ENCODE measurements at regions of chr17 and their contacts with region 1.

Region 1: DNA sequence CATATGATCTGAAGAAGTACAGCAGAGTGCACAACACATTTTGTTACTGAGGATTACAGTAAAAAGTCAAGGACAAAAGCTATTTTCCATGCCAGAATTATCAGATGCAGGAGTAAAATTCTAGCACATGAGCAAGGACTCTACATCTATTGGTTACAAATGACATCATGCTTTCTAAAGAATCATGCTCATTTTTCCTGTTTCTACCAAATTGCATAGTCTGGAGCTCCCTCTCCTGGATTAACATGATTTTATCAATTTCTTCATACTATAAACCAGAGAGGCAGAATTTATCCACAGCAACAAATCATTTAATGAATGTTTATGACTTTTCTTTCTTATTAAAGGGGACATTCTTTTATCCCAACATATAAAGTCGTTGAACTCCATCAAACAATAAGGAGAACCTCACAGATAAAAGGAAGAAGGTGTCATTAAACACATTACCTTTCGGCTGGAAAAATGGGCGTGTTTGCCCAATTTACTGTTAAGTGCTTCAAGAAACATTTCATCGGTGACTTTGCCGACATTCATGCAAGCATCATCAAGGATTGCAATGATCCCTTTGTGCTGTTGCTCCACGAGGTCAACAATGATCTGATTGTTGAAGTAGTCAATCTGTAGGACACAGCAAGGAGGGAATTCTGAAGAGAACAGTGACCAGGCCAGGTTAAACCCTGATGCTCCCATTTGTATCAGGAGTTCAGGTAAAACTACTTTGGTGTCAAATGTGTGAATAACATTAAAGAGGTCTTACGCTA is 121.7 kb downstream of the MYO1D start:
- DNase-seq: no peak
- H3K4me3 Mint-ChIP-seq: no peak overlapping the region
- H3K27ac Mint-ChIP-seq: no peak overlapping the region
- H3K4me1 Mint-ChIP-seq: peaks cover 9% of the 10 kb centered on the region
- H3K27me3 Mint-ChIP-seq: no peaks in the 10 kb centered on the region

Region 2: GRCh38 chr17:32253117-32253611 is 502.1 kb before region 1 on chr17:
- intact Hi-C with region 1: loop called (anchors 5 kb)
- DNase-seq: peak; percentile 94
- H3K4me3 Mint-ChIP-seq: no peak overlapping the region
- H3K27ac Mint-ChIP-seq: no peak overlapping the region
- H3K4me1 Mint-ChIP-seq: no peaks in the 10 kb centered on the region
- H3K27me3 Mint-ChIP-seq: peaks cover 21% of the 10 kb centered on the region

Region 3: DNA sequence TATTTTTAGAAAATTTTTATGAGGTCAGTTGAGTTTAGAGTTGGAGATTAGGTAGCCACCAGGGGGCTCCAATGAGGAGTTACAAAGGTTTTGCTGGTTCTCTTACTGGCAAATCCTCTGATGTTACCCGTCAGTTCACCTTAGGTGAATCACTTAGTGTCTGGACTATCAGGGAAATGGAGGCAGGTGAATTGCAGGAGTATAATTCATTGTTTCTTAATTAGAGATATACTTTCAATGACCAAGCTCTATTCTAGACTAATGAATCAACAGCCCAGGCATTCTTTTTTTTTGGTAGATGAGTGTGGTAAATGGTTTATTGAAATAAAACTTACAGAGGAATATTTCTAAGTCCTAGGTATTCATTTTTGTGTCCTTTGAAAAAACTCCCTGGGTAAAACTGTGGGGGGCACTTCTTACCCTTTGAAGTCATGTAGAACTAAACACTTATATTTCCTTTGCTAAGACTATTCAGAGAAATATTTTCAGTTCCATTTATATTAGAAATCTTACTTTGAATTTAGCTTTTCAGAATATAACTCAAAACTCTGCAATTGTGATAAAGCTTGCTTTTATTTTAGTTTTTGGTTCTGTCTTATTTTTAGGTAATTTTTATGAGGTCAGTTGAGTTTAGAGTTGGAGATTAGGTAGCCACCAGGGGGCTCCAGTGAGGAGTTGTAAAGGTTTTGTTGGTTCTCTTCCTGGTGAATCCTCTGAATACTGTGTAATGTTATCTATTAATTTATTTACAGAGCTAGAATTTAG is 293.2 kb before region 1 on chr17:
- intact Hi-C with region 1: loop called (anchors 5 kb)
- DNase-seq: peak; percentile 88
- H3K4me3 Mint-ChIP-seq: no peak overlapping the region
- H3K27ac Mint-ChIP-seq: no peak overlapping the region
- H3K4me1 Mint-ChIP-seq: peaks cover 29% of the 10 kb centered on the region
- H3K27me3 Mint-ChIP-seq: no peaks in the 10 kb centered on the region

Region 4: GRCh38 chr17:32486111-32486700 is 269.0 kb before region 1 on chr17:
- intact Hi-C with region 1: loop called (anchors 2 kb)
- DNase-seq: peak; percentile 92
- H3K4me3 Mint-ChIP-seq: peak overlapping the region; percentile 66
- H3K27ac Mint-ChIP-seq: peak overlapping the region; percentile 40
- H3K4me1 Mint-ChIP-seq: peaks cover 27% of the 10 kb centered on the region
- H3K27me3 Mint-ChIP-seq: no peaks in the 10 kb centered on the region

Region 5: GRCh38 chr17:32609085-32609484 is 146.1 kb before region 1 on chr17:
- intact Hi-C with region 1: loop called (anchors 1 kb)
- DNase-seq: peak; percentile 88
- H3K4me3 Mint-ChIP-seq: no peak overlapping the region
- H3K27ac Mint-ChIP-seq: no peak overlapping the region
- H3K4me1 Mint-ChIP-seq: peaks cover 6% of the 10 kb centered on the region
- H3K27me3 Mint-ChIP-seq: peaks cover 3% of the 10 kb centered on the region

Region 6: GRCh38 chr17:32659419-32659842 is 95.8 kb before region 1 on chr17:
- intact Hi-C with region 1: loop called (anchors 1 kb)
- DNase-seq: peak; percentile 89
- H3K4me3 Mint-ChIP-seq: no peak overlapping the region
- H3K27ac Mint-ChIP-seq: no peak overlapping the region
- H3K4me1 Mint-ChIP-seq: no peaks in the 10 kb centered on the region
- H3K27me3 Mint-ChIP-seq: peaks cover 8% of the 10 kb centered on the region

Region 7: DNA sequence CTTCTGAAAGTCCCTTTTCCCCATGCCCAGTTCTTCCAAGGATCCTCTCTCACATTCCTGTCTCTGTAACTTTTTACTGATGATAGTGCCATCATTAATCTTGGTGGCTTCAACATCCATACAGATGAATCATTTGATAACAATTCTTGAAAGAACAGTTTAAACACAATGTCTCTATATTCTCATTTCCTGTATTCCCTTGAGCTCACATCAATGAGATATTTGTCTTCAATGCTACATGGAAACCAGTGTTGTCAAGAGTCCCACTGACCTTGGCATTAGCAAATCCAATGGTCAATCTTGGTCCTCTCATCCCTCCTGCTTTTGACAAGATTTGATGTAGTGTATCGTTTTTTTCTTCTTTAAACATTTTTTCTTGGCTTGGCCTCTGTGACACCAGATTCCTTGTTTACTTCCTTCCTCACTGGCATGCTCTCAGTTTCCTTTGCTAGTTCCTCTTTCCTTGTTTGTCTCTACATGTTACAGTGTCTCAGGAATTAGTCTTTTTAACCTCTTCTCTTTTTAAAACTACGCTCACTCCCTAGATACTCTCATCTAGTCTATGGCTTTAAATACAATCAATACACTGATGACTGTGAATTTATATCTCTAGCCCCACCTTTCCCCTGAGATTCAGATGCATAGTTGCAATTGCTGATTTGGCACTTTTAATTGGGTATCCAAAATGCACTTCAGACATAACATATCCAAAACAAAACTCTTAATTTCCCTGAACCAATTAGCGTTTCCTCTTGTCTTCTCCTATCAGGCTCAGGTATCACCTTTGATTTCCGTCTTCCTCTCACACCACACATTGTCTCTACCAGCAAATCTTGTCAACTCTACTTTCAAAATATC is 12.3 kb before region 1 on chr17:
- intact Hi-C with region 1: no loop called
- DNase-seq: no peak
- H3K4me3 Mint-ChIP-seq: no peak overlapping the region
- H3K27ac Mint-ChIP-seq: no peak overlapping the region
- H3K4me1 Mint-ChIP-seq: no peaks in the 10 kb centered on the region
- H3K27me3 Mint-ChIP-seq: no peaks in the 10 kb centered on the region